ENCODE measurements at regions of chr5 and their contacts with region 1.

Region 1: GRCh38 chr5:16791036-16791705 is 144.9 kb downstream of the MYO10 start:
- DNase-seq: no peak
- ATAC-seq: peak in 1 of 2 donors; percentile 55

Region 2: DNA sequence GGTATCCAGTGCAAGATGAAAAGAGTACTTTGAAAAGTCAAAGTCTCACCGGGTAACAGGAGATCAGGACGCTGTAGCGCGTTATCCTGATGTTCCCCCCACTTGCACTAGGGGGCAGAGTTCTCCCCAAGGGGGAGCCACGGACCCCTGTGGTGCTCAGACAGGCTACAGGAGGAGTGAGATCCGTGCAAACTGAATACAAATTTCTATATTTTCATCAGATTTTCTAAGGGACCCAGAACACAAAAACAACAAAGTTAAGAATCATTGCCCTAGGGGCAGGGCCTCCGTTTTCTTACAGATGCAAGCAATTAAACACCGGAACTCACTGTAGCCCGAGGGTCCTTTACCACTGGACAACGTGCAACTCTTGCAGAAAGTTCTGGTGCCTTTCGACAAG is 143.0 kb after region 1 on chr5:
- intact Hi-C with region 1: loop called in 1 of 2 experiments (anchors 10 kb)
- DNase-seq: peak; percentile 52
- ATAC-seq: peak in 1 of 2 donors; percentile 34

Region 3: GRCh38 chr5:17132444-17133083 is 341.4 kb after region 1 on chr5:
- intact Hi-C with region 1: loop called (anchors 5 kb)
- DNase-seq: no peak
- ATAC-seq: no peak

Region 4: DNA sequence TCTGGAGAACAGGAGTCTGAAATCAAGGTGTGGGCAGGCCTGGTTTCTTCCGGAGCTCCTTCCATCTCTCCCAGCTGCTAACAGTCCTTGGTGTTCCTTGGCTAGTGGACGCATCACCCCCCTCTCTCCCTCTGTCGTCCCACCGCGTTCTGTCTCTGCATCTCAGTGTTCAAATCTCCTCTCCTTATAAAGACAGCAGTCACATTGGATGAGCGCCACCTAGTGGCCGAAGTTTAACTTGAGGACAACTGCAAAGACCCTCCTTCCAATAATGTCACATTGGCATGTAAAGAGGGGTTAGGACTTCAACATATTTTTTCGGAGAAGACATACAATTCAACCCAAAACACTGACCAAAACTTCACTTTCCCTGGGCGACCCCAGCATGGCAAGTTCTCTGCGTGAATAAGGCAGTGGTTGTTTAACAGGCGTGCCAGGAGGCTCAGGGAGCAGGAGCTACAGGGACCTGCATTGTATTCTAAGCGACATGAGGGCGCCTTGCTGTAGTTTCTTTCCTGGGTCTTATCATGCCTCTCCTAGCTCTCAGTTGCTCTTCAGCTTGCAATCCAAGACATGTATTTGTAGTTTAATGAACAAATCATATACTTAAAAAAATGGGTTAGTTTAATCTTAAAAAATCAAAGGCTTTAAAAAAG is 398.3 kb after region 1 on chr5:
- intact Hi-C with region 1: loop called in 1 of 2 experiments (anchors 2 kb)
- DNase-seq: peak; percentile 83
- ATAC-seq: peak; percentile 56 to 71